Endothelial cell of umbilical vein (primary cell): ENCODE measurements at regions of chr1 and their contacts with region 1.

Region 1: DNA sequence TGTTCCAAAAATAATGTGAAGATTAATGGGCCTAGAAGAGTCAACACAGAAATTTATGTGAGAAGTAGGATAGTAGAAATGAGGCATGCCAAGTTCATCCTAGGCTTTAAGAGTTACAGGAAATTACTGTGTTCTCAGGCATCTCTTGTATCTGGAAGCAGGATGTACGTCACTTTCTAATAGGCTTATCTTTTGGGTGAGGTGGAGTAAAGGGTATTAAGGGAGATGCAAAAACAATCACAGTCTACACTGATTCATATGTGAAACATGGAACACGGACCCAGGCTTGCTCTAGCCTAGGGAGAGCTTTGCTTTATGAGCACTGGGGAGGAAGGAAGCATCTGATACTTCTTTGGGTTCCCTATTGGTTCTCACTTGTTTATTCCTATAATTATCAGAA is 84.5 kb upstream of the RGS4 start:
- DNase-seq: peak; percentile 88
- H3K4me3 ChIP-seq: no peak overlapping the region
- H3K27ac ChIP-seq: peak overlapping the region; percentile 75
- H3K4me1 ChIP-seq: peaks cover 27% of the 10 kb centered on the region
- H3K27me3 ChIP-seq: no peaks in the 10 kb centered on the region
- CTCF ChIP-seq: no peak
- POLR2A ChIP-seq: peak; percentile 28

Region 2: GRCh38 chr1:162835157-162835899 is 149.4 kb before region 1 on chr1:
- CTCF ChIA-PET with region 1: no interaction called
- POLR2A ChIA-PET with region 1: no interaction called
- dilution Hi-C with region 1: no loop called
- intact Hi-C with region 1: no loop called
- DNase-seq: no peak
- H3K4me3 ChIP-seq: no peak overlapping the region
- H3K27ac ChIP-seq: no peak overlapping the region
- H3K4me1 ChIP-seq: no peaks in the 10 kb centered on the region
- H3K27me3 ChIP-seq: no peaks in the 10 kb centered on the region
- CTCF ChIP-seq: no peak
- POLR2A ChIP-seq: no peak

Region 3: DNA sequence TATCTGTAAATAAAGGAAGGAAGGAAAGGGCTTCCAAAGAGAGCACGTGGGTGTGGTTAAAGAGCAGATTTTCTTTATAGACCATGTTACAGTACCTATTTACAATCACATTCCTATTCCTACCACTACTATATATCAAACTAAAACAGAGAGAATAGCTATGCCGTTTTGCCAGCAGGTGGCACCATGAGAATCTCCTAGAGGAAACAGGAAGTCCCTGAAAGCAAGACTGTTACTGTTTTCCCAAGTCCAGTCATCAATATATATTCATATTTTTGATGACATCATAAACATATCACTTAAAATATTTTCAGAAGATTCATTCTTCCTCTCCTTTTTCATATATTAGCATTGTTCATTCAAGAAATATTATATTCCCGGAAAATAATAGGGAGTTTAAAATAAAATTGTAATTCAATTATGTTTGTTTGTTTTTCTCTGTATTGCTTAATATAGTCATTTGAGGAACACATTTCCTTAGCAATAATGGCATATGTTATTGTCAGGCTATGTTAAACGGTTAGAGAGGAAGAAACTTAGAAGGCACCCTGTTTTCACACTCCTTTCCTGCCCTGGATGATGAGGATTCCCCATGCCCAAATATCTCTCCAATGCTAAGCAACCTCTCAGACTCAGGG is 130.3 kb before region 1 on chr1:
- CTCF ChIA-PET with region 1: no interaction called
- POLR2A ChIA-PET with region 1: no interaction called
- dilution Hi-C with region 1: no loop called
- intact Hi-C with region 1: loop called (anchors 1 kb)
- DNase-seq: peak; percentile 82
- H3K4me3 ChIP-seq: peak overlapping the region in 1 of 3 experiments; percentile 4
- H3K27ac ChIP-seq: peak overlapping the region; percentile 93
- H3K4me1 ChIP-seq: peaks cover 57% of the 10 kb centered on the region
- H3K27me3 ChIP-seq: no peaks in the 10 kb centered on the region
- CTCF ChIP-seq: peak; percentile 63 to 68
- POLR2A ChIP-seq: peak; percentile 7

Region 4: GRCh38 chr1:162905174-162906158 is 79.2 kb before region 1 on chr1:
- CTCF ChIA-PET with region 1: no interaction called
- POLR2A ChIA-PET with region 1: no interaction called
- dilution Hi-C with region 1: no loop called
- intact Hi-C with region 1: loop called (anchors 1 kb)
- DNase-seq: peak; percentile 53
- H3K4me3 ChIP-seq: no peak overlapping the region
- H3K27ac ChIP-seq: no peak overlapping the region
- H3K4me1 ChIP-seq: peaks cover 19% of the 10 kb centered on the region
- H3K27me3 ChIP-seq: no peaks in the 10 kb centered on the region
- CTCF ChIP-seq: no peak
- POLR2A ChIP-seq: no peak

Region 5: DNA sequence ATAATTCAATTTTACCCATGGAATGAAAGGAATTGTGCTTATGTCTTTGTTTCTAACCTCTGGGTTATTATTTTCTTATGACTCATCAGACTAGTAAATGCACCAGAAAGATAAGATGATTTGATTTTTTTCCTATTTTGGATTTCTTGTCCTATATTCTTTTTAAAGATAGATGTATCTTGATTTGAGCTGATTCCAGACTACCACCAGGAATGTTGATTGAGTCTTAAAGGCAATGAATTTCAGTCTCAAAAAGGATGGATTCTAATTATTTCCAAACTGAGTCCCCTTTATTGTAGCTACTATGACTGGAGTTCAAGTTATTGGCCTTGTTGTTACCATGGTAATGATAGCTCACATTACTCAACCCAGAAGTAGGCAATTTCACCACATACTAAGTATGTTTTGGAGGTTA is 11.3 kb before region 1 on chr1:
- CTCF ChIA-PET with region 1: interaction called, 14 read pairs
- POLR2A ChIA-PET with region 1: no interaction called
- dilution Hi-C with region 1: no loop called
- intact Hi-C with region 1: loop called (anchors 1 kb)
- DNase-seq: peak; percentile 84
- H3K4me3 ChIP-seq: no peak overlapping the region
- H3K27ac ChIP-seq: peak overlapping the region; percentile 46
- H3K4me1 ChIP-seq: peaks cover 12% of the 10 kb centered on the region
- H3K27me3 ChIP-seq: no peaks in the 10 kb centered on the region
- CTCF ChIP-seq: no peak
- POLR2A ChIP-seq: no peak

Region 6: GRCh38 chr1:163035446-163036249 is 50.9 kb after region 1 on chr1:
- CTCF ChIA-PET with region 1: no interaction called
- POLR2A ChIA-PET with region 1: no interaction called
- dilution Hi-C with region 1: no loop called
- intact Hi-C with region 1: loop called (anchors 2 kb)
- DNase-seq: peak; percentile 72
- H3K4me3 ChIP-seq: no peak overlapping the region
- H3K27ac ChIP-seq: peak overlapping the region; percentile 54
- H3K4me1 ChIP-seq: peaks cover 21% of the 10 kb centered on the region
- H3K27me3 ChIP-seq: no peaks in the 10 kb centered on the region
- CTCF ChIP-seq: no peak
- POLR2A ChIP-seq: no peak

Region 7: DNA sequence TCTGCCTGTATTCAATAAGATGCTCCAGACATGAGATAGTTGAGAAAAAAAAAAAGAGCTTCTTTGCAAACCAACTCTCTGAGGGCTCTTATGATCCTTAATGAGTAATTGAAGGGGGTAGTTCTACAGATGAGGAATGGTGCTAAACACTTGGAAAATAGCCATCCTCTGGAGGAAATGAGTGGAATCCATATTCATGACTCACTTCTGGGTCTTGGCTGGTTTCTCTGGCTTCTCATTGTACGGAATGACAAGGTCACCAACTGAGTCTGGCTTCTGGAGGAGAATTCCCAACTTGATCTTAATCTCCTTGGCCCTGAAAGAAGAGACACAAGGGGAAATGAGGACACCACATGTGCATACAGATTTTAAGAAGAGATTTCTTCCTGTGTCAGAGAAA is 183.4 kb after region 1 on chr1:
- CTCF ChIA-PET with region 1: no interaction called
- POLR2A ChIA-PET with region 1: no interaction called
- dilution Hi-C with region 1: no loop called
- intact Hi-C with region 1: loop called (anchors 1 kb)
- DNase-seq: peak; percentile 98
- H3K4me3 ChIP-seq: no peak overlapping the region
- H3K27ac ChIP-seq: peak overlapping the region; percentile 83
- H3K4me1 ChIP-seq: peaks cover 84% of the 10 kb centered on the region
- H3K27me3 ChIP-seq: no peaks in the 10 kb centered on the region
- CTCF ChIP-seq: no peak
- POLR2A ChIP-seq: no peak